Heart right ventricle (tissue), 16 donors: ENCODE measurements at regions of chr5 and their contacts with region 1.

Region 1: GRCh38 chr5:80960531-80961375 is 590 bp downstream of the RASGRF2 start:
- DNase-seq: peak; percentile 29 to 40
- ATAC-seq: peak; percentile 74 to 91 (median 83)
- H3K4me3 ChIP-seq: peak overlapping the region; percentile 54 to 77 (median 65)
- H3K27ac ChIP-seq: peak overlapping the region; percentile 83 to 92 (median 87)
- H3K4me1 ChIP-seq: peaks cover 0 to 34% (median 4%) of the 10 kb centered on the region in 9 donors
- H3K27me3 ChIP-seq: peaks cover 0 to 88% (median 41%) of the 10 kb centered on the region in 7 donors
- CTCF ChIP-seq: peak in 8 of 9 donors; percentile 11 to 54 (median 30)

Region 2: DNA sequence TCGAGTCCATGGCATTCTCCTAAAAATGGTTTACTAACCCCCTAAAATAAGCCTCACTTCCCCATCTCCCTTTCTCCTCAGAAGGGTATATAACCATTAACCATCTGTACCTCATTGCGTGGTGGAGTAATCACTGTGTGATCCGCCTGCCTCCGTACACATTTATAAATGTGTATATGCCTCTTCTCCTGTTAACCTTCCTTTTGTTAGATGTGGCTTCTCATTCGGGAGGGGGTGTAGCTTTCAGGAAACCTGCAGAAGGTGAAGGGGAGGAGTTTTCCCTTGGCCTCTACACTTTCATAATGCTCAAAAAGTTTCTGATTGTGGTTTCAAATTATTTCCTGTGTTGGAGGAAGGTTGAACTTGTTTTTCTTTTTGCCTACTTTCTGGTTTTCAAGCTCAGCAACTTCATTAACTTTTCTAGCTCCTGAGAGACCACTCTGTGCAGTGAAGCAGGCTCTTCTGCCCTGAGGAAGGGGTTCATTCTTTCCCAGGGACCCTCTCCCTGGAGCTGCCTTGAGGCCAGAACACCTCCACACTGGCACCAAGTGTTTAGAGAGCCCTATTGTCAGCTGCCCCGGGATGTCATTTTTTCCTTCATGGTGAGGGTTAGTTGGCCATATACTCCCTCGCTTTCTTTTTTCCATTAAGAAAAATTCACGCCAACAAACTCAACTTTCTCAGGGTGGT is 46.3 kb after region 1 on chr5:
- intact Hi-C with region 1: loop called in 2 of 10 experiments (anchors 5 kb)
- DNase-seq: no peak
- ATAC-seq: no peak
- H3K4me3 ChIP-seq: no peak overlapping the region
- H3K27ac ChIP-seq: peak overlapping the region in 8 of 10 donors; percentile 23 to 80 (median 66)
- H3K4me1 ChIP-seq: peaks cover 0 to 44% (median 16%) of the 10 kb centered on the region in 9 donors
- H3K27me3 ChIP-seq: no peaks in the 10 kb centered on the region
- CTCF ChIP-seq: no peak

Region 3: DNA sequence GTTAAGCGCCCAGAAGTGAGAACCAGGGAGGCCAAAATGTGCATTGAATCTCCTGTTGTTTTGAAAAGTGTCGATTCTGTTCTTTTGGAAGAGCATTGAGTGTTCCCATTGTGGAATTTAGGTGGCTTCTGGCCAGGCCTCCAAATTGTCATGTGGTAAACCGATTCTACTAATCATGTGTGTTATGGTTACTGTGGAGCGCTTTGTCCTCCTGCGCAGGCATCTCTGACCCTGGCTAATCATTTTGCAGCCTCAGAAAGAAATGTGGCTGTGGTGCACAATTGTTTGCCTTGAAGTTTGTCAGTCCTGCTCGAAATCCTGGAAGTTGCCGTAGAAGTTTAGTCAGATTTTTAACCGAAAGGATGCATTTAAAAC is 120.7 kb after region 1 on chr5:
- intact Hi-C with region 1: loop called in 2 of 10 experiments (anchors 5 kb)
- DNase-seq: peak in 1 of 2 donors; percentile 18
- ATAC-seq: peak in 7 of 8 donors; percentile 27 to 66 (median 49)
- H3K4me3 ChIP-seq: no peak overlapping the region
- H3K27ac ChIP-seq: peak overlapping the region in 8 of 10 donors; percentile 18 to 77 (median 58)
- H3K4me1 ChIP-seq: peaks cover 0 to 10% (median 0%) of the 10 kb centered on the region in 9 donors
- H3K27me3 ChIP-seq: no peaks in the 10 kb centered on the region
- CTCF ChIP-seq: no peak

Region 4: DNA sequence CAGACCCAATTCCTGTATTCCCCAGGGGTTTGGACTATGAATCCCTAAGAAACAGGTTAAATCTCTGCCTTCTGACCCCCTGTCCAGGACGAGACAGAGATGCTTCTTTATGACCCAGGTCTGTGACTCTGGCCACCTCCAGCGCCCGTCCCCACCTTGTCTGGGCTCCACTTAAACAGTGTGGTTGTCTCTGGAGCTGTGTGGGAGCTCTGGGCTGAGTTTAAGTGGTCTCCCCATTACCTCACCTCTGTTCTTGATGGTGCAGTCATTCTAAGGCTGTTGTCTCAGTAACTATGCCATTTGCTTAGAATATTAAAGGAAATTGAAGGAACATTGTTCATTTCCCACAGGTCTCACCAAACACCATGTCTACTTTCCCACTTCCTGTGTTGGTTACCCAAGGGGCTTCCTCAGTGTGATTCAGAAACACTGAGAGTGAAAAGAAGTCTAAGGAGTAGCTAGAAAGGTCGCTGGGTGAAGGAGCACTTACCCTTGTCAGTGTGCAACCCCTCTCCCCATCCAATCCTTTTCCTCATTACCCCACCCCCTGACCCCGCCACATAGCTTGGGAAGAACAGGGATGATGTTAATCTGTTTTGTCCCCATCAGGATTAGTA is 144.6 kb after region 1 on chr5:
- intact Hi-C with region 1: loop called in 3 of 10 experiments (anchors 5 to 10 kb)
- DNase-seq: no peak
- ATAC-seq: no peak
- H3K4me3 ChIP-seq: no peak overlapping the region
- H3K27ac ChIP-seq: no peak overlapping the region
- H3K4me1 ChIP-seq: no peaks in the 10 kb centered on the region
- H3K27me3 ChIP-seq: no peaks in the 10 kb centered on the region
- CTCF ChIP-seq: no peak

Region 5: GRCh38 chr5:81165493-81166119 is 204.9 kb after region 1 on chr5:
- intact Hi-C with region 1: loop called in 1 of 10 experiments (anchors 10 kb)
- DNase-seq: peak; percentile 29 to 69
- ATAC-seq: peak; percentile 50 to 85 (median 70)
- H3K4me3 ChIP-seq: no peak overlapping the region
- H3K27ac ChIP-seq: no peak overlapping the region
- H3K4me1 ChIP-seq: peaks cover 0 to 7% (median 0%) of the 10 kb centered on the region in 9 donors
- H3K27me3 ChIP-seq: no peaks in the 10 kb centered on the region
- CTCF ChIP-seq: peak in 8 of 9 donors; percentile 23 to 75 (median 64)